Right lobe of liver (tissue), 6 donors: ENCODE measurements at regions of chr9 and their contacts with region 1.

Region 1: DNA sequence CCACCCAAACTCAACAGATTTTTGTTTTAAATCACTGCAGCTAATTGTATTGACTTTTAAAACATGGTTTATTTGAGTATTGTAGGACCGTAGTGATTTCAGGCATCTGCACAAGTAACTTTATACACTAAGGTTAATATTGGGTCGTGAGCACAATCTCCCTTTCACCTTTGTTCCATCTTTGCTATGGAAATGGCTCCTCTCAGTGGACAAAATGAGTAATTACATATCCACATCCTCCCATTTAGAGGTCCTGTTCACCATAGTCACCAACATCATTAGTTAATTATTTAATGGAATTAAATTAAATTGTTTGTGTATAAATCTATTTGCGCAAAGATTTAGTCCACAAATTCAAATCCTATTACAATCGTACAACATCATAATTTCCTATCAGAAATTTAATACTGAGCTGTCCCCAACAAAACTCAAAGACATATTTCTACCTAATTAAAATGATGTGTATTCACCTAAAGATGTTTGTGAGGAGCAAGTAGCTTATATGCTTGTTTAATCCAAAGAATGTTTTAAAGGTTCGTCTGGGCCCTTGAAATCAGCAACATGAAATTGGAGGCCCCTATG is 173.0 kb upstream of the DAPK1 start:
- DNase-seq: no peak
- ATAC-seq: peak; percentile 87 to 94 (median 92)
- H3K4me3 ChIP-seq: no peak overlapping the region
- H3K27ac ChIP-seq: no peak overlapping the region
- H3K4me1 ChIP-seq: no peaks in the 10 kb centered on the region
- H3K27me3 ChIP-seq: no peaks in the 10 kb centered on the region
- CTCF ChIP-seq: peak; percentile 81 to 92 (median 84)
- POLR2A ChIP-seq: no peak

Region 2: DNA sequence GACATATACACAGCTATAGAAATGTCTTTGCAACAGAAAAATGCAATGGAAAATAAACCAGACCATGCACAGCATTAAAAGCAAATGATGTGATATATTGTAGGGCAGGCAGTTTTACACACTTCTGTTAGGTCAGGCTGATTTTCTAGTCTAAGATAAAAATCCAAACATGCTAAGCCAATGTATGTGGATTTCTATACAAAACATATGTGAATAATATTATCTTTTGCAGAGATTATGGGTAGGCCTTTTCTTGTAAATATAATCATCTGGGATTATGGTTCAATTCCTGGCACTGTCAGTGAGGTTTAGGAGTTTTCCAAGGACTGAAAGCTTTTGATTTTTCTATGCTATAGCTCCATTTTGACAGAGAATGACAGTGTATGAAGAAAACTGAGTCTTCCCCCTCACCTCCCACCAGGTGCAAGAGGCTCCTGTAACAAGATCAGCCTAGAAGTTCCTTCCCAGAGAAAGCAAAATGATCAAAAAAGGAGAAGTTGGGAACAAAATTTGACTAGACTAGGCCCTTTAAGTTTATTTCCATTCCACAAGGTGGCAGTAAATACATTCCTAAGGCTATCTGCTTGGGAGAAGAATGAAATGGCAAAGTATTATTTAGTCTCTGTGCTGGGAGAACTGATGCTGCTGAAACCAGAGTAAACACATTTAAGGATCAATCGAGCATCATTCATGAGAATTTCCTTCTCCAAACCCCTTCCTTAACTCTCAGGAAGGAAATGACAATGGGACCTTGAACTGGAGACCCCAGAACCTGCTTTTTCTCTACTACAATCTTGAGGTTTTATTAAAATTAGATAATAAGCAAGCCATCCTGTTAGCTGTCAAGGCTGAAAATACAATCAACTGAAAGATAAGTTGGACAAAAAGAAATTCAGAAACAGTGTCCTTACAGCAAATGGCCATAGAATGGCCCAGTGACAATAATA is 837.5 kb before region 1 on chr9:
- intact Hi-C with region 1: loop called in 1 of 2 experiments (anchors 10 kb)
- DNase-seq: no peak
- ATAC-seq: peak; percentile 69 to 85 (median 78)
- H3K4me3 ChIP-seq: no peak overlapping the region
- H3K27ac ChIP-seq: no peak overlapping the region
- H3K4me1 ChIP-seq: no peaks in the 10 kb centered on the region
- H3K27me3 ChIP-seq: no peaks in the 10 kb centered on the region
- CTCF ChIP-seq: peak; percentile 61 to 68 (median 63)
- POLR2A ChIP-seq: no peak

Region 3: DNA sequence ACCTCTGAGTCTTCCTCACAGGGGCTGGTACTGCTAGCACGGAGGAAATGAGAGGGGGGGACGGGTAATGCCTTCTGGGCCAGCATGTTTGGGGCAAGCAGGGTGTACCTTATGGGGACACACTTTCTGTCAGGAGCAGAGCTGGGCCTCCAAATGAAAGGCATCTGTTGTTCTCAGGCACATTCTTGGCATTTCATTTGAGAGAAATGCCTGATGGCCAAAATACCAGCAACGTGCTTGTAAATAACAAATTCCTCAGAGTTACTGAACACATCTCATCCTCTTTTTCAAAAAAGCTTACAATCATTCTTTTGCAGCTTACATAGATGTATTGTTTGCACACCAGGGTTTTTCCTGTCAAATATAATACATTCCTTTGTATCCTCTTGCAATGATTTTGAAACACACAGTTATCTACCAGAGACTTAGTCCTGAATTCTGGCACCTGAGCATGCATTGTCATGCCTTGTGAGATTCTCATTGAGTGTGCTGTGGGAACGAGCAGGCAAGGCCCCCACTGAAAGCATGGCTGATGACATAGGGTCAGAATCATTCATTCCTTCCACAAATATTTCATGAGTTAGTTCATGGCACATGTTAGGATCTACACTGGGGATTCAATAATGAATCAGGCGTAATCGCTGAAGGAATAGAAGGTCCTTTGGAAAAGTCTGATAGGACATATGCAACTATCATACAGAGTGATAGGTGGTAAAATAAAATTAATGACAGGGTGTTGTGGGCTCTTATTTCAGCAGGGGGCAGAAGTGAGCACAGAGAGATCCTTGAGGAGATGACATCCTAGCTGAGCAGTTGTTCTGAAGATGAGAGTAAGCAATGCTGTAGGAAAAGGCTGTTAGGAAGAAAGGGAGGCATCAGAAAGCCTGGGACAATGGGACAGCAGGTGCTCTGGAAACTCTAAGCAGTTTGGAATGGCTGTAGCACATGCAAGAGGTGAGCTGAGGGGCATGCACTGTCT is 709.5 kb before region 1 on chr9:
- intact Hi-C with region 1: loop called in 1 of 2 experiments (anchors 10 kb)
- DNase-seq: no peak
- ATAC-seq: peak in 2 of 4 donors; percentile 27 to 40
- H3K4me3 ChIP-seq: no peak overlapping the region
- H3K27ac ChIP-seq: no peak overlapping the region
- H3K4me1 ChIP-seq: no peaks in the 10 kb centered on the region
- H3K27me3 ChIP-seq: no peaks in the 10 kb centered on the region
- CTCF ChIP-seq: peak; percentile 31 to 48 (median 38)
- POLR2A ChIP-seq: no peak

Region 4: DNA sequence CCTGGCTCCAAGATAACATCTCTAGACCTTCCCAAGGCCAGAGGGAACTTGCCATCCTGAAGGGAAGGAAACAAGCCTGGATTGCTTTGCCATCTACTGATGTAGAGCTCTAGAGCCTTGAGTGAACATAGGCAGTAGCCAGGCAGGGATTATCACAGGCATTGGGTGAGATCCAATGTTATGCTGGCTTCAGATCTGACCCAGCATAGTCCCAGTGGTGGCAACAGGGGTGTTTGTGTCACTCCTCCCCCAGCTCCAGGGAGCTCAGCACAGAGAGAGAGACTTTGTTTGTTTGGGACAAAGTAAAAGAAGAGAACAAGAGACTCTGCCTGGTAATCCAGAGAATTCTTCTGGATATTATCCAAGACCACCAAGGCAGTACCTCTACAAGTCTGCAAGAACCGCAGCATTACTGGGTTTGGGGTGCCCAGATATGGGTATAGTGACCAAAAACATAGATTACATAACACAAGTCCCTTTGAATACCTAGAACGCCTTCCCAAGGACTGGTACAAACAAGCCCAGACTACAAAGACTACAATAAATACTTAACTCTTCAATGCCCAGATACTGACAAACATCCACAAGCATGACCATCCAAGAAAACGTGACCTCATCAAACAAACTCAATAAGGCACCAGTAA is 35.4 kb after region 1 on chr9:
- intact Hi-C with region 1: no loop called
- DNase-seq: peak in 1 of 3 donors; percentile 72
- ATAC-seq: peak; percentile 90 to 98 (median 95)
- H3K4me3 ChIP-seq: no peak overlapping the region
- H3K27ac ChIP-seq: peak overlapping the region in 1 of 3 donors; percentile 15
- H3K4me1 ChIP-seq: peaks cover 0 to 9% (median 0%) of the 10 kb centered on the region in 4 donors
- H3K27me3 ChIP-seq: no peaks in the 10 kb centered on the region
- CTCF ChIP-seq: no peak
- POLR2A ChIP-seq: no peak